PC-3 (cell line): ENCODE measurements at regions of chr6 and their contacts with region 1.

Region 1: GRCh38 chr6:130885392-130886192 is 58.4 kb downstream of the SMLR1 start:
- DNase-seq: peak; percentile 83
- ATAC-seq: peak; percentile 80
- H3K4me3 ChIP-seq: no peak overlapping the region
- H3K27ac ChIP-seq: no peak overlapping the region
- H3K4me1 ChIP-seq: 0 out of 2 replicates have a peak, but pooled peaks cover 4% of the 10 kb centered on the region
- H3K27me3 ChIP-seq: no peaks in the 10 kb centered on the region
- CTCF ChIP-seq: peak; percentile 82

Region 2: GRCh38 chr6:130933712-130934200 is 48.2 kb after region 1 on chr6:
- CTCF ChIA-PET with region 1: no interaction called
- POLR2A ChIA-PET with region 1: no interaction called
- intact Hi-C with region 1: loop called (anchors 5 kb)
- DNase-seq: peak; percentile 86
- ATAC-seq: peak; percentile 72
- H3K4me3 ChIP-seq: peak overlapping the region; percentile 32; the same call in 1 of the 2 replicates
- H3K27ac ChIP-seq: peak overlapping the region; percentile 66
- H3K4me1 ChIP-seq: peaks cover 75% of the 10 kb centered on the region
- H3K27me3 ChIP-seq: no peaks in the 10 kb centered on the region
- CTCF ChIP-seq: no peak

Region 3: GRCh38 chr6:131116749-131117360 is 231.3 kb after region 1 on chr6:
- CTCF ChIA-PET with region 1: interaction called, 9 read pairs
- POLR2A ChIA-PET with region 1: interaction called, 3 read pairs
- intact Hi-C with region 1: loop called (anchors 1 kb)
- DNase-seq: peak; percentile 76
- ATAC-seq: peak; percentile 48; the same call in 1 of the 2 replicates
- H3K4me3 ChIP-seq: no peak overlapping the region
- H3K27ac ChIP-seq: no peak overlapping the region
- H3K4me1 ChIP-seq: no peaks in the 10 kb centered on the region
- H3K27me3 ChIP-seq: no peaks in the 10 kb centered on the region
- CTCF ChIP-seq: peak; percentile 67

Region 4: DNA sequence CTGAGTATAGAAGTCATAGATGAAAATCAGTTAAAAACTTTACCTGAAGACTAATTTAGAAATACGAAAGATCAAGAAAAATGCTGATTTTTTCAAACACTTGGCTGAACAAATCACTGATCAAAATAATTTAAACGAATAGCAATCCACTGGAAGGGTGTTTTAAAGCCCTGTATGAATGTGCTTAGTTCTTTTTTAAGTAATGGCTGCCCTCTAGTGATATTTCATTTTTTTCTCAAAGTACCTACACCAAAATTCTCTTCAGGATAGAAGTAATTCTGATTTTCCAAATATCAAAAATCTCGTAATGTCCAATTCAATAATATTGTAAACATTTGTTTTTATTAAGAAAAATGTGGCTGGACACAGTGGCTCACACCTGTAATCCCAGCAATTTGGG is 282.2 kb after region 1 on chr6:
- CTCF ChIA-PET with region 1: no interaction called
- POLR2A ChIA-PET with region 1: no interaction called
- intact Hi-C with region 1: loop called (anchors 2 kb)
- DNase-seq: peak; percentile 2
- ATAC-seq: no peak
- H3K4me3 ChIP-seq: no peak overlapping the region
- H3K27ac ChIP-seq: no peak overlapping the region
- H3K4me1 ChIP-seq: peaks cover 5% of the 10 kb centered on the region; the same call in 1 of the 2 replicates
- H3K27me3 ChIP-seq: no peaks in the 10 kb centered on the region
- CTCF ChIP-seq: peak; percentile 43; the same call in 1 of the 2 replicates

Region 5: DNA sequence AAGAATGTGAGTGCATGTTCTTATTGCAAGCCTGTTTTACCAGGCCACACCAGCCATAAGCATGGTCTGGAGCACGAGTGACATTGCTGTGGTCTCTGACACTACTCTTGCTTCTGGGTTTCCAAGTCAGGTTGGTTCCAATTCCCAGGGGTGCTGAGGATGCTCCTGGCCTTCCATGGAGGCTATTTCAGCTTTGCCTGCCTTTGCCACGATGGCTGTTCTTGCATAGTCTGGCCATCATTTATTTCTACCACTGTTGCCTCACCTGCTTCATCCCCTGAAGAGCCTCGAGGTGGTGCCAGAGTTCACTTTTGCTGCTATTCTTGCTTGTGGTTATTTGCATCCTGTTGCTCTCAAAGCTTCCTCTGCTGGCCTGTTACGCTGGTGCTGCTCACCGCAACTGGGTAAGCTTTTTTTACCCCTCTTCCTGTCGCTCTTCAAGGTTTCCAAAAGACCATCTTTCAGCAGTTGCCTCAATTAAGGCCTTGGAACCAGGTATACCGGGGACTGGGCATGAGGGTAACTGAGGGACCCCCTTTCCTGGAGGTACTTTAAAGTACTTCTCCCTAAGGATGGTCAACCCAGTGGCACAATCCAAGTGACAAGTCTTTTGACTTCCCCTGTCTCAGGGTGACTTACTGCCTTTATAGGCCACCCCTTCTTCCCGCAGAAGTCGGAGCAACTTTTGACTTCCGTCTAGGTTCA is 314.1 kb after region 1 on chr6:
- CTCF ChIA-PET with region 1: no interaction called
- POLR2A ChIA-PET with region 1: no interaction called
- intact Hi-C with region 1: loop called (anchors 1 kb)
- DNase-seq: peak; percentile 65
- ATAC-seq: peak; percentile 82
- H3K4me3 ChIP-seq: no peak overlapping the region
- H3K27ac ChIP-seq: no peak overlapping the region
- H3K4me1 ChIP-seq: no peaks in the 10 kb centered on the region
- H3K27me3 ChIP-seq: no peaks in the 10 kb centered on the region
- CTCF ChIP-seq: peak; percentile 80

Region 6: DNA sequence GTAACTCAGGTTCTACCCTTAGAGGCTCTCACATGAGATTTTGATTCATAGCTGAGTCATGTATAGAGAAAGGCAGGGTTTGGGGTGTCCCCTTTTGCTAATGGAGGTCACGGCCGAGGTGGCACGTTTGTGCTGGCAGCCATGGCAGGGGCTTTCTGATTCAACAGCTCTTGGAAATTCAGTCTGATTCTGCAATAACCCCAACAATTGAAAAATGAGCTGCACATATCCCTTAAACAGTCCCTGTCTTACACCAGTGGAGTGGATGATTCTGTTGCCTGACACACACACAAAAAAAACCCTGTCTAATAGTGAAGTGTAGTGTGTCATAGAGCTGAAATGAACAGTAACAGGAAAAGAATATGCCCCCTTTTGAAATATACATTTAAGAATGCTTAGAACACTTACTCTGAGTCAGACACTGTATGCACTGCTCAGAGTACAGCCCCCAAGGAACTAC is 647.0 kb after region 1 on chr6:
- CTCF ChIA-PET with region 1: interaction called, 3 read pairs
- POLR2A ChIA-PET with region 1: no interaction called
- intact Hi-C with region 1: loop called (anchors 5 kb)
- DNase-seq: no peak
- ATAC-seq: no peak
- H3K4me3 ChIP-seq: no peak overlapping the region
- H3K27ac ChIP-seq: no peak overlapping the region
- H3K4me1 ChIP-seq: no peaks in the 10 kb centered on the region
- H3K27me3 ChIP-seq: no peaks in the 10 kb centered on the region
- CTCF ChIP-seq: no peak